Gastrocnemius medialis (tissue), 4 donors: ENCODE measurements at regions of chr7 and their contacts with region 1.

Region 1: GRCh38 chr7:29189743-29190201 is 4.8 kb upstream of the CHN2 start:
- DNase-seq: no peak
- ATAC-seq: no peak
- H3K4me3 ChIP-seq: no peak overlapping the region
- H3K27ac ChIP-seq: no peak overlapping the region
- H3K4me1 ChIP-seq: peaks cover 0 to 8% of the 10 kb centered on the region in 2 donors
- H3K27me3 ChIP-seq: peaks cover 0 to 6% (median 0%) of the 10 kb centered on the region in 3 donors
- CTCF ChIP-seq: peak; percentile 41 to 79 (median 68)
- POLR2A ChIP-seq: no peak

Region 2: GRCh38 chr7:28865601-28866144 is 324.1 kb before region 1 on chr7:
- in situ Hi-C with region 1: no loop called
- intact Hi-C with region 1: no loop called
- DNase-seq: no peak
- ATAC-seq: no peak
- H3K4me3 ChIP-seq: no peak overlapping the region
- H3K27ac ChIP-seq: no peak overlapping the region
- H3K4me1 ChIP-seq: peaks cover 0 to 7% of the 10 kb centered on the region in 2 donors
- H3K27me3 ChIP-seq: no peaks in the 10 kb centered on the region
- CTCF ChIP-seq: no peak
- POLR2A ChIP-seq: no peak

Region 3: DNA sequence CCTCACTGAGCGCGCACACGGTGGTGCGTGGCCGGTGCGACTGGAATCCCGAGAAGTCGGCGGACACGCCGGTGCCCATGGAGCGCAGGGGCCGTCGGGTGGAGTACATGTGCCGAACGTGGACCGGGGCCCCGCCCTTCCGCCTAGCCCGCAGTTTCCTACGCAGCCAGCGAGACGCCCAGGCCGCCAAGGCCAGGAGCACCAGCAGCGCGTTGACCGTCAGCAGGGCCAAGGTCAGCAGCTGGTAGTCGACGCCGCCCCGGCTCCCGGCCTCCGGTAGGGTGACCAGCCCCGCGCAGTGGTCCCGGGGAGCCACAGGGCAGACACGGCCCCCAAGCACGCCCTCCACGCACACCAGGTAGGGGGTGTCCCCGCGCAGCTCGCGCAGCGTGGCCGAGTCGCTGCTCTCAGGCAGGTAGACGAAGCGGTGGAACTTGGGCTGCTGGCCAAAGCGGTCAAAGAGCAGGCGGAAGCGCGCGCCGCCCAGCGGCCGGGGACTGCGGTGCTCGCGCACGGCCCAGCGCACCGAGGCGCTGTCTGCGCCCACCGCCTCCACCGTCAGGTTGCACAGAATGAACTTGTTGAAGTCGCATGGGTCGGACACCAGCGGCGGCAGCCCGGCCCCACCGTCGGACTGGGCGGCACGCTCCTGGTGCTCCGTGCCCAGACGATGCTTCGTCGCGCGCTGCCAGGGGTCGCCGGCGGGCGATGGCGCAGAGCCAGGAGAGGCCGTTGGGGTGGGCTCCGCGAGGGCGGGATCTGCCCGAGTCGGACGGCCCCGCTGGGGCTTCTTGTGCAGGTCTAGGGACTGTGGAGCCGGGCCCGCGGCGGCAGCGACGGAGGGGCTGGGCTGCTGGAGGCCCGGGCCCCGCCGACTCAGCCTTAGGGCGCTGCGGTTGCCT is 233.8 kb before region 1 on chr7:
- in situ Hi-C with region 1: no loop called
- intact Hi-C with region 1: no loop called
- DNase-seq: peak; percentile 44 to 57
- ATAC-seq: peak; percentile 55 to 69
- H3K4me3 ChIP-seq: peak overlapping the region; percentile 48 to 85 (median 62)
- H3K27ac ChIP-seq: peak overlapping the region; percentile 45 to 62 (median 52)
- H3K4me1 ChIP-seq: peaks cover 14 to 23% of the 10 kb centered on the region in 2 donors
- H3K27me3 ChIP-seq: peaks cover 13 to 24% (median 20%) of the 10 kb centered on the region in 3 donors
- CTCF ChIP-seq: peak; percentile 41 to 78 (median 66)
- POLR2A ChIP-seq: no peak

Region 4: DNA sequence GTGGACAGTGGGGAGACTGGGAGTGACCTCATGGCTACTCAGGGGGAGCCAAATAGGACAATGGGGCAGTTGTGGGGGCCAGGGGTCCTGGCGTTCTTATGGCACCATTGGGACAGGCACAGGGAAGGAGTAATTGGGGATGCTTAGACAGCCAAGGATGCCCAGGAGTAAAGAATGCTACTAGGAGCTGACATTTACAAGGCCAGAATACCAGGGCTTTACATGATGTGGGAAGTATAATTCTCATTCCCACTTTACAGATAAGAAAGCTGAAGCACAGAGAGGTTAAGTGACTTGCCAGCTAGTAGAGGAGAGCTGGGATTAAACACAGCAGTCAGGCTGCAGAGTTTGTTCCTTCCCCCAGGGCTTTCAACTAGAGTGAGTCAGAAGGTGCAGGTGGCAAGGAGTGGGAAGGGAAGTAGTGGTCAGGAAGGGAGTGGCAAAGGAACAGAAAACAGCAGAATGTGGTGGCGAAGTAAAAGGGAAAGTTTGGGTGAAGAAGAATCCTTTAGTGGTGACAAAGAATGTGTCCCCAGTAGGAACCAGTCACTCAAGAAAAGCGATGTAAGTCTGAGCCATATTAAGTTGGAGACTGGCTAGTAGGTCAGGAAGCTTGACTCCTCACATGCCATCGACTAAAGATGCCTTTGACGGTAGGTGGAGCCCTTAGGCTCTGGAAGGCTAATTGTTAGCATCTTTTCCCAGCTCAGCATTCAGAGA is 76.2 kb before region 1 on chr7:
- in situ Hi-C with region 1: no loop called
- intact Hi-C with region 1: loop called (anchors 10 kb)
- DNase-seq: no peak
- ATAC-seq: no peak
- H3K4me3 ChIP-seq: no peak overlapping the region
- H3K27ac ChIP-seq: no peak overlapping the region
- H3K4me1 ChIP-seq: no peaks in the 10 kb centered on the region
- H3K27me3 ChIP-seq: no peaks in the 10 kb centered on the region
- CTCF ChIP-seq: no peak
- POLR2A ChIP-seq: no peak

Region 5: GRCh38 chr7:29328811-29329210 is 139.0 kb after region 1 on chr7:
- in situ Hi-C with region 1: no loop called
- intact Hi-C with region 1: no loop called
- DNase-seq: no peak
- ATAC-seq: no peak
- H3K4me3 ChIP-seq: no peak overlapping the region
- H3K27ac ChIP-seq: no peak overlapping the region
- H3K4me1 ChIP-seq: no peaks in the 10 kb centered on the region
- H3K27me3 ChIP-seq: no peaks in the 10 kb centered on the region
- CTCF ChIP-seq: no peak
- POLR2A ChIP-seq: no peak

Region 6: DNA sequence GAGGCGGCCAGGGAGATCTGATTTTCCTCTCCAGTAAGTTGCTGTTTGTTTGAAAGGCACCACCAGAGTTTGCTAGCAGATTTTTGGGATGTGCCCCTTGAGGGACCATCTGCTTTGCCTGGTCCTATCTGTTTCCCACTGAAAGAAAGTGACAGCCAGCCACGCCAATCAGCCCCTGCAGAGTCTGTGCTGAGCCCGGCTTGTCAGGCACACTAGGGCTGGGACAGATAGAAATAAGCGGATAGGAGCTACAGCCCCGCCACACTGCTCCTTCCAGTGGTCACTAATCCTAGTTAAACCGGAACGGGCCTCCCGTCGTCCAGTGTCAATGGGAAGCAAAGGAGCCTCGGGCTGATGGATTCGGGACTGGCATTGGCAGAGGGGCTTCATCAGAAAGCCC is 212.0 kb after region 1 on chr7:
- in situ Hi-C with region 1: loop called in 3 of 4 experiments (anchors 5 to 25 kb)
- intact Hi-C with region 1: no loop called
- DNase-seq: no peak
- ATAC-seq: no peak
- H3K4me3 ChIP-seq: no peak overlapping the region
- H3K27ac ChIP-seq: no peak overlapping the region
- H3K4me1 ChIP-seq: no peaks in the 10 kb centered on the region
- H3K27me3 ChIP-seq: no peaks in the 10 kb centered on the region
- CTCF ChIP-seq: no peak
- POLR2A ChIP-seq: no peak